GM12878 (cell line): ENCODE measurements at regions of chr5 and their contacts with region 1.

Region 1: GRCh38 chr5:88226881-88227450 is 41.7 kb downstream of the TMEM161B start:
- DNase-seq: no peak
- ATAC-seq: no peak; the same call in 2 of the 3 replicates
- H3K4me3 ChIP-seq: no peak overlapping the region
- H3K27ac ChIP-seq: no peak overlapping the region
- H3K4me1 ChIP-seq: no peaks in the 10 kb centered on the region
- H3K27me3 ChIP-seq: no peaks in the 10 kb centered on the region
- CTCF ChIP-seq: no peak
- EP300 ChIP-seq: no peak
- POLR2A ChIP-seq: no peak
- RAD21 ChIP-seq: no peak

Region 2: DNA sequence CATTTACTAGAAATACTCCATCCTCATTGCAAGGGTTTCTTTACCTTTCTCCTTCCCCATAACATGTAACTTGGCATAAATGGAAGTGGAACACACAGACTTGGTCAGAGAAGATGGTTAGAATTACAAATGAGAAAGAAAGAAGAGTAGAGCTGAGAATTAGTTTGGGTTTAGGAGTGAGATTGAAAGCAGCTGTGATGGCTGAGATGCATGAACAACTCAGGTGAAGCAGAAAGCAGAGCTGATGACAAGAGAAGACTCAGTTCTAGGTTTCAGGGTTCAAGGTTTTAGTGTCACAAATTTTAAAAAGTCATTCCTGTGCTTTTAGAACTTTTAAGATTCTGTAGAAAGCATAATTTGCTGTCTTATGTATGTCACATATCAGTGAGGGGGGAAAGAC is 12.3 kb before region 1 on chr5:
- CTCF ChIA-PET with region 1: interaction called, 5 read pairs
- POLR2A ChIA-PET with region 1: no interaction called
- RAD21 ChIA-PET with region 1: no interaction called
- SMC1A ChIA-PET with region 1: interaction called, 10 read pairs
- in situ Hi-C with region 1: no loop called
- intact Hi-C with region 1: no loop called
- DNase-seq: no peak
- ATAC-seq: no peak
- H3K4me3 ChIP-seq: no peak overlapping the region
- H3K27ac ChIP-seq: peak overlapping the region; percentile 13; the same call in 1 of the 2 replicates
- H3K4me1 ChIP-seq: no peaks in the 10 kb centered on the region; the same call in 1 of the 2 replicates
- H3K27me3 ChIP-seq: no peaks in the 10 kb centered on the region
- CTCF ChIP-seq: no peak
- EP300 ChIP-seq: no peak
- POLR2A ChIP-seq: no peak
- RAD21 ChIP-seq: no peak